ENCODE measurements at regions of chr9 and their contacts with region 1.

Region 1: GRCh38 chr9:129610473-129611301 is 10.2 kb downstream of the C9orf50 start:
- DNase-seq: peak; percentile 91
- H3K4me3 ChIP-seq: peak overlapping the region; percentile 60 to 77
- H3K27ac ChIP-seq: peak overlapping the region; percentile 58 to 60; a peak in 3 of 4 replicates
- H3K4me1 ChIP-seq: peaks cover 4 to 25% of the 10 kb centered on the region in 2 experiments; a peak in 2 of 4 replicates
- H3K27me3 ChIP-seq: no peaks in the 10 kb centered on the region
- CTCF ChIP-seq: peak; percentile 87
- EP300 ChIP-seq: no peak
- RAD21 ChIP-seq: peak; percentile 90

Region 2: GRCh38 chr9:129125476-129125875 is 485.2 kb before region 1 on chr9:
- CTCF ChIA-PET with region 1: interaction called, 27 read pairs
- POLR2A ChIA-PET with region 1: interaction called, 3 read pairs
- DNase-seq: no peak
- H3K4me3 ChIP-seq: no peak overlapping the region
- H3K27ac ChIP-seq: no peak overlapping the region
- H3K4me1 ChIP-seq: peaks cover 14 to 15% of the 10 kb centered on the region in 2 experiments; a peak in 3 of 4 replicates
- H3K27me3 ChIP-seq: no peaks in the 10 kb centered on the region
- CTCF ChIP-seq: no peak
- EP300 ChIP-seq: no peak
- RAD21 ChIP-seq: no peak

Region 3: GRCh38 chr9:129139993-129140396 is 470.7 kb before region 1 on chr9:
- CTCF ChIA-PET with region 1: interaction called, 235 read pairs
- POLR2A ChIA-PET with region 1: no interaction called
- DNase-seq: peak; percentile 75
- H3K4me3 ChIP-seq: peak overlapping the region; percentile 50 to 53
- H3K27ac ChIP-seq: peak overlapping the region; percentile 99 to 100
- H3K4me1 ChIP-seq: peaks cover 43 to 55% of the 10 kb centered on the region in 2 experiments; a peak in 3 of 4 replicates
- H3K27me3 ChIP-seq: no peaks in the 10 kb centered on the region
- CTCF ChIP-seq: no peak
- EP300 ChIP-seq: peak; percentile 61 to 96
- RAD21 ChIP-seq: peak; percentile 29

Region 4: DNA sequence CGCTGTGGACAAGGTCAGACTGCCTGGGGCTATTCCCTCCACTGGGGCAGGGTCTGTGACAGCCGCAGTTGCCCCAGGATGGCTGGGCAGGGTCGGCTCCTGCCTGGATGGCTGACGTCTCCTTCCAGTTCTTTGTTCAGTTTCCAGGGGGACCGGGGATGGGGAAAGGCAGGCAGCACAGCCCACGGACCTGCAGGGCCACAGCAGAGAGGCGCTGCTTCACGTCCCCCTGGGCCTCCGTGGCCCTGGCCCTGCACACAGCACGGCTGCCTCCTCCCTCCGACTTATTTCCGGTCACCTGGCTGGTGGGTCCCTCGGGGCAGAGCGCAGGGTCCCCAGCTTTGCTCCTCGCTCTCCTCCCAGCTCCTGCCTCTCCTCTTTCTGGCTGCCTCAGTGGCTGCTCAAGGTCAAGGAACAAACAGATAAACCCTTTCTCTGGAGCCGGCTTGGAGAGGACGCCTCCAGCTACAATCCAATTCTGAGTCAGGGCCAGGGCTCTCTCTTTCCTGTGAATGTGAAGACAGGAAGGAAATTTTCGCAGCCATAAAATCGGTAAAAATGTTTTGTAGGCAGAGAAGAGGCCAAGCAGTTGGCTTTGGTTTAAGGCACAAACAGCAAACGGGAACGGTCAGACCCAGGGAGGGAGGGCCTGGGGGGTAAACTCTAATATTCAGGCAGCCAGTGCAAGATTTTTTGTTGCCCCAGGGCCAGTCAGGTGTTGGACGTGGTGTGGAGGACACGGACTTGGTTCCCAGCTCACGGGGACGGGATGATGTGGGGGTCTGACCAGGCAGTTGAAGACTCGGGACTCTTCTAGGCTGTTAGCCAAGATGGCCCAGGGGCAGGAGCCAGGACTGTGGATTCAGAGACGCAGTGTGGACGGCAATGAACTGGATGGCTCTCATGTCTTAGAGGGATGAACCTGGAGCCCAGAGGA is 159.3 kb before region 1 on chr9:
- CTCF ChIA-PET with region 1: no interaction called
- POLR2A ChIA-PET with region 1: no interaction called
- DNase-seq: no peak
- H3K4me3 ChIP-seq: no peak overlapping the region
- H3K27ac ChIP-seq: peak overlapping the region in 1 of 2 experiments; percentile 12; a peak in 1 of 4 replicates
- H3K4me1 ChIP-seq: peaks cover 0 to 28% of the 10 kb centered on the region in 2 experiments; a peak in 1 of 4 replicates
- H3K27me3 ChIP-seq: no peaks in the 10 kb centered on the region
- CTCF ChIP-seq: no peak
- EP300 ChIP-seq: no peak
- RAD21 ChIP-seq: no peak

Region 5: GRCh38 chr9:129482521-129483414 is 127.9 kb before region 1 on chr9:
- CTCF ChIA-PET with region 1: interaction called, 13 read pairs
- POLR2A ChIA-PET with region 1: no interaction called
- DNase-seq: peak; percentile 90
- H3K4me3 ChIP-seq: peak overlapping the region; percentile 37 to 51; a peak in 3 of 4 replicates
- H3K27ac ChIP-seq: peak overlapping the region; percentile 97 to 100
- H3K4me1 ChIP-seq: peaks cover 55 to 78% of the 10 kb centered on the region in 2 experiments; a peak in 3 of 4 replicates
- H3K27me3 ChIP-seq: no peaks in the 10 kb centered on the region
- CTCF ChIP-seq: no peak
- EP300 ChIP-seq: peak in 1 of 2 experiments; percentile 53; a peak in 1 of 4 replicates
- RAD21 ChIP-seq: peak; percentile 35

Region 6: DNA sequence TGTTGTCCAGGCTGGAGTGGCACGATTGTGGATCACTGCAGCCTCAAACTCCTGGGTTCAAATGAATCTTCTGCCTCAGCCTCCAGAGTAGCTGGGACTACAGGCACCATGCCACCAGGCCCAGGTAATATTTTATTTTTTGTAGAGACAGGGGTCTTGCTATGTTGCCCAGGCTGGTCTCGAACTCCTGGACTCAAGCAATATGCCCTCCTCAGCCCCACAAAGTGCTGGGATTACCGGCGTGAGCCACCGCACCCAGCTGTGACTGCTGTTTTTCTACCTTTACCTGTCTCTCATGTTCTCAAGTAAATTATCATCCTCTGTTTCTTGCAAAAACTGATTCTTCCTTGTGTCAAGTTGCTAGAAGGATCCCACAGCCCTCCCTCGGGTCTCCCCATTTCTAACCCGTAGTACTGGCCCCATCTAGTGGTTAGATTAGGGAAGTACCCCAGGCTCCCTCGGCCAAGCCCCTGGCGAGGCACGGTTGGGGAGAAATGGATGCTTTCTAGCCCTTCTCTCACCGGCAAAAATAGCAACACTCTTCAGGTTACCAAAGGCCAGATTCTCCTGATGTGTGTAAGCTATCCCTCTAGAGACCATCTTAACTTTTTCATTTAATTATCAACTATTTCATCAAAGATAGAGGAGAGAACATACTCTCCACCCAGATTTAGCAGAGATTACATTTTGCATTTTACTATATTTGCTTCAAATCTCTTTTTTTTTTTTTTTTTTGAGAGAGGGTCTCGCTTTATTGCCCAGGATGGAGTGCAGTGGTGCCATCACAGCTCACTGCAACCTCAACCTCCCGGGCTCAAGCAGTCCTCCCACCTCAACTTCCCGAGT is 173.1 kb after region 1 on chr9:
- CTCF ChIA-PET with region 1: interaction called, 10 read pairs
- POLR2A ChIA-PET with region 1: no interaction called
- DNase-seq: peak; percentile 91
- H3K4me3 ChIP-seq: no peak overlapping the region
- H3K27ac ChIP-seq: no peak overlapping the region
- H3K4me1 ChIP-seq: no peaks in the 10 kb centered on the region
- H3K27me3 ChIP-seq: no peaks in the 10 kb centered on the region; the same call in 1 of the 2 replicates
- CTCF ChIP-seq: peak; percentile 93
- EP300 ChIP-seq: no peak
- RAD21 ChIP-seq: peak; percentile 99

Measured in SK-N-SH (cell line).